Right ventricle myocardium inferior (tissue), 1 donor: ENCODE measurements at regions of chr6 and their contacts with region 1.

Region 1: DNA sequence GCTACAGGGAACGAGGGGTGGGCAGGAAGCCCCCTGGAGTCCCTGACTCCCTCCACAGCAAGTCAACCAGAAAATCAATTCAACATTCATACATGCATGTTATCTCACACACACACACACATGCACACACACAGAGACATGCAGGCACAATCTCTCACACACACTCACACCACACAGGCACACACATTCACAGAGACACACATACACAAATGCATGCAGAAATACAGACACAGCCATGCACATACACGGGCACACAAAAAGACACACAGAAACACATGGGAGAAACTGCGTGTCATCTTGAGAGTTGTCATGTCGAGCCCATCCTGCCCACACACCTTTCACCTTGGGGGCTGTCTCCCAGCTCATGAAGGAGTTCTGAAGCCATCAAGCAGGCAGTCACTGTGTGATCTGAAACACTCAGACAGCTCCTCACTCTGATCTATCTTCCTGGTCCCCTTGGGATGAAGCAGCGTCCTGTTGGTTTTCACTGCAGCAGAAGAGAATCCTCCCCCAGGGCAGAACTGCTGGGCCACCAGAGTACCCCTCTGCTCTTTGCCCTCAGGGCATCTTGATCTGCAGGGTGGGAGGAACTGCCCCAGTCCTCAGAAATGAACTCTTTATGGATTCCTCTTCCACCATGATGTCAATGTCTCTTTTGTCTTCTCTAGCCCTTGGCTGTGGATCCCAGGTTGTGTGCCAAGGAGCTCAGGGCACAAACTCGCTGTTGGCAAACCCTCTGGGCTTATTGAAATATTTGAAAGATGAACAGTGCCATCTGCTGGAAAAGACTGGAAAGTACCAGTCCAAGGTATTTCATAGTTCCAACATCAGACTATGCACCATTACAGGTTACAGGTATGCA is 8.8 kb downstream of the RAET1L start:
- DNase-seq: no peak
- ATAC-seq: peak; percentile 82

Region 2: GRCh38 chr6:149723771-149724417 is 292.7 kb before region 1 on chr6:
- intact Hi-C with region 1: loop called (anchors 10 kb)
- DNase-seq: no peak
- ATAC-seq: peak; percentile 86

Region 3: DNA sequence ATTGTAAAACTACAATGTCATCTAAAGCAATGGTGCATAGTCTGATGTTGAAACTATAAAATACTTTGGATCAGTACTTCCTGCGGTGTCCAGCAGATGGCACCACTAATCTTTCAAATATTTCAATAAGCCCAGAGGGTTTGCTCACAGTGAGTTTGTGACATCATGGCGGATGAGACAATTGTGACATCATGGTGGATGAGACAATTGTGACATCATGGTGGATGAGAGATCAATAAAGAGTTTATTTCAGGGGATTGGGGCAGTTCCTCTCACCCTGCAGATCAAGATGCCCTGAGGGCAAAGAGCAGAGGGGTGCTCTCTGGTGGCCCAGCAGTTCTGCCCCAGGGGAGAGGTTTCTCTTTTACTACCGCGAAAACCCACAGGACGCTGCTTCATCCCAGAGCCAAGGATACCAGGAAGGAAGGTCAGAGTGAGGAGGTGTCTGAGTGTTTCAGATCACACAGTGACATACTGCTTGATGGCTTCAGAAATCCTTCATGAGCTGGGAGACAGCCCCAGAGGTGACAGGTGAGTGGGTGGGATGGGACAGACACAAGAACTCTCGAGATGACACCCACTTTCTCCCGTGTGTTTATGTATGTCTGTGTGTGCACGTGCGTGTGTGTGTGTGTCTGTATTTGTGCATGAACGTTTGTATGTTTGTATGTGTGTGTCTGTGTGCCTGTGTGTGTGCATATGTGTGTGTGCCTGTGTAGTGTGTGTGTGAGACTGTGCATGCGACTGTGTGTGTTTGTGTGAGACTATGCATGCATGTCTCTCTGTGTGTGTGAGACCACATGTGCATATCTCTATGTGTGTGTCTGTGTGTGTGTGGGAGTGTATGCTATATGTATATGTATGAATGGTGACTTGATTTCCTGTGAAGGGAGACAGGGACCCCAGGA is 82.1 kb before region 1 on chr6:
- intact Hi-C with region 1: loop called (anchors 1 kb)
- DNase-seq: no peak
- ATAC-seq: peak; percentile 69